Mammary epithelial cell (primary cell): ENCODE measurements at regions of chr10 and their contacts with region 1.

Region 1: GRCh38 chr10:98309366-98310355 is 41.7 kb upstream of the LOXL4 start:
- DNase-seq: peak; percentile 50
- H3K4me3 ChIP-seq: no peak overlapping the region
- H3K27ac ChIP-seq: no peak overlapping the region
- H3K4me1 ChIP-seq: peaks cover 9% of the 10 kb centered on the region
- H3K27me3 ChIP-seq: no peaks in the 10 kb centered on the region
- CTCF ChIP-seq: peak; percentile 84 to 87

Region 2: GRCh38 chr10:98170249-98171117 is 139.2 kb before region 1 on chr10:
- CTCF ChIA-PET with region 1: interaction called, 3 read pairs
- dilution Hi-C with region 1: no loop called
- in situ Hi-C with region 1: no loop called
- intact Hi-C with region 1: loop called (anchors 1 kb)
- DNase-seq: peak; percentile 50
- H3K4me3 ChIP-seq: no peak overlapping the region
- H3K27ac ChIP-seq: no peak overlapping the region
- H3K4me1 ChIP-seq: no peaks in the 10 kb centered on the region
- H3K27me3 ChIP-seq: no peaks in the 10 kb centered on the region
- CTCF ChIP-seq: peak; percentile 79 to 83

Region 3: GRCh38 chr10:98262571-98262970 is 47.1 kb before region 1 on chr10:
- CTCF ChIA-PET with region 1: no interaction called
- dilution Hi-C with region 1: no loop called
- in situ Hi-C with region 1: no loop called
- intact Hi-C with region 1: loop called (anchors 1 kb)
- DNase-seq: peak; percentile 42
- H3K4me3 ChIP-seq: no peak overlapping the region
- H3K27ac ChIP-seq: no peak overlapping the region
- H3K4me1 ChIP-seq: peaks cover 2% of the 10 kb centered on the region
- H3K27me3 ChIP-seq: no peaks in the 10 kb centered on the region
- CTCF ChIP-seq: peak; percentile 47 to 82

Region 4: DNA sequence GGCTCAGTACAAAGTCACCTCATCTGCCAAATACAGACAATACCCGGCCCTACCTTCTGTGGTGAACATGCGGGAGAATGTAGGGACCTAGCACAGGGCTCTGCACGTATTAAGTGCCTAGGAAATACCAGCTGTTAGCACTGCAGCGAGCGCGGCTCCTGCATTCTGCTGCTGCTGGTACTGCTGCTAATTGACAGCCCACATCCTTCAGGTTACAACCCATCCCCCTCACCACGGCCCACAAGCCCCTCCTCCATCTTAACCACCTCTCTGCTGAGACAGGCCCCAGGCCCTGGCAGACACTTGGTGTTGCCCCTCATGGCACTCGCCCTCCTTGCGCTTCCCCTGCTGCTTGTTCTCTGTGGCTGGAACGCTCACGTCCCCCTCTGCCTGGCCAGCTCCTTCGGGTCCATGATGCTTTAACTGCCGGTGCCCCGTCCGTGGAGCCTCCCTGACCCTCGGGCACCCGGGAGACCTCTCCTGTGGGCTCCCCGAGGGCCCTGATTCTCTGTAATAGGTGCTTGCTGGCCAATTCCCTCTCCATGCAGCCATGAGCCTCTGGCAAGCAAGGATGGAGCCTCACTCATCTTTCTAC is 11.6 kb after region 1 on chr10:
- CTCF ChIA-PET with region 1: no interaction called
- dilution Hi-C with region 1: no loop called
- in situ Hi-C with region 1: no loop called
- intact Hi-C with region 1: no loop called
- DNase-seq: no peak
- H3K4me3 ChIP-seq: no peak overlapping the region
- H3K27ac ChIP-seq: no peak overlapping the region
- H3K4me1 ChIP-seq: peaks cover 18% of the 10 kb centered on the region
- H3K27me3 ChIP-seq: no peaks in the 10 kb centered on the region
- CTCF ChIP-seq: no peak

Region 5: GRCh38 chr10:98331885-98332284 is 22.2 kb after region 1 on chr10:
- CTCF ChIA-PET with region 1: no interaction called
- dilution Hi-C with region 1: no loop called
- in situ Hi-C with region 1: no loop called
- intact Hi-C with region 1: loop called (anchors 2 kb)
- DNase-seq: peak; percentile 17
- H3K4me3 ChIP-seq: no peak overlapping the region
- H3K27ac ChIP-seq: no peak overlapping the region
- H3K4me1 ChIP-seq: no peaks in the 10 kb centered on the region
- H3K27me3 ChIP-seq: no peaks in the 10 kb centered on the region
- CTCF ChIP-seq: peak; percentile 58 to 79